Activated T-helper 1 cell treated with anti-CD3 and anti-CD28 coated beads, Interleukin-12 subunit alpha, Interleukin-12 subunit beta, Interleukin-2, Interleukin-4 antibody, amounts not matched to agents 30 ng/mL and 10 ng/mL and 1 ng/mL, durations not matched to agents 14 hours and 24 hours and 36 hours (primary cell): ENCODE measurements at regions of chr5 and their contacts with region 1.

Region 1: GRCh38 chr5:95554647-95555548 is at the starts of genes ARSK and SKIC3:
- DNase-seq: peak; percentile 90
- H3K4me3 Mint-ChIP-seq: peak within 1 kb of the TSS; percentile 94
- H3K27ac Mint-ChIP-seq: peak within 1 kb of the TSS; percentile 94
- H3K4me1 Mint-ChIP-seq: peaks cover 39% of the 10 kb centered on the region
- H3K27me3 Mint-ChIP-seq: no peaks in the 10 kb centered on the region
- total RNA-seq, gene ARSK: 3.9 and 4.2 TPM in 2 replicates
- total RNA-seq, gene SKIC3: 60.2 and 63.8 TPM in 2 replicates

Region 2: GRCh38 chr5:95591490-95591901 is 36.6 kb after region 1 on chr5:
- intact Hi-C with region 1: loop called (anchors 1 kb)
- DNase-seq: no peak
- H3K4me3 Mint-ChIP-seq: no peak overlapping the region
- H3K27ac Mint-ChIP-seq: peak overlapping the region; percentile 24
- H3K4me1 Mint-ChIP-seq: peaks cover 23% of the 10 kb centered on the region
- H3K27me3 Mint-ChIP-seq: peaks cover 2% of the 10 kb centered on the region

Region 3: DNA sequence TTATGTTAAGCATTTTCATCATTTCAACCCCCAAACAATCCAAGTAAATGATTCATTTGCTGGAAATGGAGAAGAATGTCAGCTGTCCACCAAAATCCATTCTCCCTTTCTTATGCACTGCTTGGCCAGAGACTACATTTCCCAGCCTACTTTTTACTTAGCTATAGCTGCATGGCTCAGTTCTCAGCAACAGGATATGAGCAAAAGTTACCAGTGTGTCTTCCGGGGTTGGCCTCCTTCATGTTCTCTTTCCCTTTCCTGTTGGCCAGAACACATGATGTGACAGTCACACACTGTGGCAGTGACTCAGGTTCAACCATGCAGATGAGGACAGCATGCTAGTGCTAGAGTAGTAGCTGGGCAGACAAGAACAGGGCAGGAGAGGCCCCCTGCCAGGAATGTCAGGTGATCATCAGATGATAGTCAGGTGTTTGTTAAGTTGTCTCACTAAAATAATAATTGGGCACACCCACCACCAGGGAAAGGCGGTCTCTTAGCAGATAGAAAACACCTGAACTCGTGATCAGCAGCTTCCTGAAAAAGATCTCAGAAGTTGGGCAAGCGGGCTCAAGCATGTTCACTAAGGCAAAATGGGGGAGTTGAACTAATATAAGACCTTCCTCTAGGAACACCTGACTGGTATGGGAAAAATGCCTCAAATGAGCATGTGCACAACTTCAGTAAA is 77.2 kb after region 1 on chr5:
- intact Hi-C with region 1: loop called (anchors 1 kb)
- DNase-seq: peak; percentile 59
- H3K4me3 Mint-ChIP-seq: peak overlapping the region; percentile 4
- H3K27ac Mint-ChIP-seq: peak overlapping the region; percentile 83
- H3K4me1 Mint-ChIP-seq: peaks cover 13% of the 10 kb centered on the region
- H3K27me3 Mint-ChIP-seq: peaks cover 8% of the 10 kb centered on the region

Region 4: GRCh38 chr5:95822542-95823181 is 267.8 kb after region 1 on chr5 and contains the start of gene GLRX:
- intact Hi-C with region 1: loop called (anchors 2 kb)
- DNase-seq: peak; percentile 55
- H3K4me3 Mint-ChIP-seq: peak within 1 kb of the TSS; percentile 91
- H3K27ac Mint-ChIP-seq: peak within 1 kb of the TSS; percentile 91
- H3K4me1 Mint-ChIP-seq: peaks cover 68% of the 10 kb centered on the region
- H3K27me3 Mint-ChIP-seq: no peaks in the 10 kb centered on the region
- total RNA-seq, gene GLRX: 17.2 and 18.3 TPM in 2 replicates

Region 5: DNA sequence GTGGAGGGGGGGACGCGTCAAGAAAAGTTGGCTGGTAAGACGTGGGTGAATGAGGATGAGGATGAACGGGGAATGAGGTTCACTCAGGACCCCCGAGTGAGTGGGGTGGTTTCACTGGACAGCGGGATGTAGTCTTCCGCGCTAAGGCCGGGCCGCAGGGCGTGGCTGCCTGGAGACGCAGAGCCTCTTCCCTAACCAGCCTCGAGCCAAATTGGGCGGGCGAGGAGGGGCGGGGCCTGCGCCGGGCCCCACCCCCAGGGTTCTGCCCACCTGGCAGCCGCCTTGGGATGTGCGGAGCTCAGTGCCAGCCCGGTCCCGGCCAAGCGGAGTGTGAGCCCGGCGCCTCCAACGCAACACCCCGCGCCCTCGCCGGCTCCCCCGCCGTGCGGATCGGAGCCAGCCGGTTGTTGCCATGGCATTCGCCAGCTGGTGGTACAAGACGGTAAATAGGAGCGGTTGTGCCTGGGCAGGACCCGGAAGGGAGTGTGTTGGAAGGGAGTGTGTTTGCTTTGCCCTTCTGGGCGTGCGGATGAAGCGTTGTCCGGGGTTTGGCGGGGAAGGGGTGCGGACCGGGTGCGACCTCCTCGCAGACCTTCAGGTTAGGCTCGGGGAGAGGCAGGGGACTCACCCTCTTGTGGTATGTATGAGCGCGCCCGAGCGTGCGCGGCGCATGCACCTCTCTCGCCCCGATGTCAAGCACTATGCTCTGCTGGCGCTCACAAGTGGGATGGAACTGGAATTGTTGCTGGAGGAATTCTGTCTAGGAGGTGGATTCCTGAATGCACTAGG is 1108.0 kb after region 1 on chr5:
- intact Hi-C with region 1: loop called (anchors 2 kb)
- DNase-seq: peak; percentile 82
- H3K4me3 Mint-ChIP-seq: peak overlapping the region; percentile 98
- H3K27ac Mint-ChIP-seq: peak overlapping the region; percentile 98
- H3K4me1 Mint-ChIP-seq: peaks cover 67% of the 10 kb centered on the region
- H3K27me3 Mint-ChIP-seq: peaks cover 11% of the 10 kb centered on the region

Region 6: DNA sequence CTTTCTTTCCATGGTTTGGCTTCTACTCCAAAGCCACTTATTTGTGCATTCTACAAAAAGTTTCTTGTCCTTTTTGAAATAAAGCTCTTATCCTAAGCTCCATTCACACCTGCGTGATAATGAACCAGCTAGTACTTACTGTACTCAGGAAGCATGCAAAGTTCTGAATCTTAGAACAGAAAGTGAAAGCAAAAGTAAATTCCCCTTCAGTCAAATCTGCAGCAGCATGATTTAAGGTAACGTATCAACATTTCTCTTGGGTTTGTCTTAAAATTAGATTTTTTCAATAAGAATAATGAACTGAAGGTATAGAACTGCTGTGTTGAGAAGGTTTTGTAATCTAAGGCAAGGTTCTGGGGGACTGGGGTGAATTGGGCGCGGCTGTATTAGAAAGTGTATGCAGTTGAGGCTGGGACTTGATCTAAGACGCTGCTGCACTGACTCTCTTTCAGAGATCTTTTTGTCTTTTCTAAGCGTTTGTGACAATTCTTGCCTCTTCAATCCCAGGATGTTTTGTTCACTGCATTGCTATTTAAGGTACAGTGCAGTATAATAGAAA is 1321.5 kb after region 1 on chr5 and contains the start of gene ERAP2:
- intact Hi-C with region 1: loop called (anchors 10 kb)
- DNase-seq: no peak
- H3K4me3 Mint-ChIP-seq: peak within 1 kb of the TSS; percentile 93
- H3K27ac Mint-ChIP-seq: peak within 1 kb of the TSS; percentile 99
- H3K4me1 Mint-ChIP-seq: peaks cover 66% of the 10 kb centered on the region
- H3K27me3 Mint-ChIP-seq: no peaks in the 10 kb centered on the region
- total RNA-seq, gene ERAP2: 52.9 and 54.4 TPM in 2 replicates